HAP-1 (cell line): ENCODE measurements at regions of chr22 and their contacts with region 1.

Region 1: DNA sequence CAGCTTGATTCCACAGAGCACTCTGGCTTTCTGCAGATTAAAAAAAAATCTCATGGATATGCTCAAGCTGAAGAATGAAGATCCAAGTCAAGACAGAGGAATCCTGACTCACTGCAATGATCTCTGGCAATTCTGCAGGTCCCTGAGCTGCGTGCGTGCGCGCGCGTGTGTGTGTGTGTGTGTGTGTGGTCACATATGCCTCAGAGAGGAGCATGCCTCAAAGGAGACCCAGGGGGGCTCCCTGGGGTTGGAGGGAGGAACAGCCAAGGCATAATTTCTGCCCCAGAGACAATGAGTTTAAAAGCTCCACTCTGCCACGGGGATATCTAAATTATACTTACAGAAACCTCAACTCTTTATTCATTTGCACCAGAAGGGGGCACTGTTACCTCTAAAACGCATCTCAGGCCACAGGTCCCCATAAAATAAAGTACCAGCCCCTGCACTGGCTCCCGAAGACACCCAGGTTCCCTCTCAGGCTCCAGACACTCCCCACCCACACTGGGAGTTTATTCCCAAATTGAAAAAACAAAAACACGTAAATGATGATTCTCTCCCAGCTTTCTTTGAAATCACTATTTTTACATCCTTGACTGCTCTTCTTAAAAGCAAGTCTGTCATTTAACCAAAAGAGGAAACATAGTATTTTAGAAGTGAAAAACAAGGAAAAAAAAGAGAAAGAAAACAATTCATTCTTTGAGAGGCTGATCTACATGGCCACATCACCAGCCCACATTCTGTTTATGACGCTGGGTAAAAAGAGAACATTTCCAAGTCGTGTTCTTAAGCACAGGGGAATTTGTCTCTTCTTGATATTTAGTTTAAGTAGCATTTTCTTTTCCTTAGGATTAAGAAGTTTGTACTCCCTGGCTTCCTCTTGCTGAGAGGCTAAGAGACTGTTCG is 401.0 kb downstream of the LARGE1 start:
- DNase-seq: peak; percentile 38 to 60
- H3K4me3 ChIP-seq: no peak overlapping the region
- H3K4me1 ChIP-seq: no peaks in the 10 kb centered on the region
- H3K27me3 ChIP-seq: no peaks in the 10 kb centered on the region

Region 2: GRCh38 chr22:33565580-33565995 is 46.3 kb after region 1 on chr22:
- in situ Hi-C with region 1: no loop called
- DNase-seq: no peak
- H3K4me3 ChIP-seq: no peak overlapping the region
- H3K4me1 ChIP-seq: no peaks in the 10 kb centered on the region
- H3K27me3 ChIP-seq: no peaks in the 10 kb centered on the region

Region 3: GRCh38 chr22:34111210-34111824 is 592.0 kb after region 1 on chr22:
- in situ Hi-C with region 1: loop called (anchors 25 kb)
- DNase-seq: peak; percentile 38 to 51
- H3K4me3 ChIP-seq: no peak overlapping the region
- H3K4me1 ChIP-seq: no peaks in the 10 kb centered on the region
- H3K27me3 ChIP-seq: no peaks in the 10 kb centered on the region